Posterior vena cava (tissue), 2 donors: ENCODE measurements at regions of chr19 and their contacts with region 1.

Region 1: DNA sequence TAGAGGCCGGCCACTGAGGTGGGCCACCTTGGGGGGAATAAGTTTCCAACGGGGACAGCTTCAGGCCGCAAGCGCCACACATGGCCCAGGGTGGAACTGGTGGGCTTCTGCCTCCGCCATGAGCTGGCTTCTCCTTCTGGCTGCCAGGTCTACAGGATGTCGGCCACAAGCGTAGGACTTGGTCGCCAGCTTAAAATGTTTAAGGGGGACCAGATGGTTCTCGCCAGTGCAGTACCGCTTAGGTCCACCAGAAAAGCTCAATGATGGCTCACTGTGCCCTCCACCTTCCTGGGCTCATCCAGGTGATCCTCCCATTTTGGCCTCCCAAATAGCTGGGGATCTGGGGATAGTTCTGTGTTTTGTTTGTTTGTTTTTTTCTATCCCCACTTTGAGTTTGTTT is 38.7 kb upstream of the ZNF254 start:
- DNase-seq: no peak

Region 2: DNA sequence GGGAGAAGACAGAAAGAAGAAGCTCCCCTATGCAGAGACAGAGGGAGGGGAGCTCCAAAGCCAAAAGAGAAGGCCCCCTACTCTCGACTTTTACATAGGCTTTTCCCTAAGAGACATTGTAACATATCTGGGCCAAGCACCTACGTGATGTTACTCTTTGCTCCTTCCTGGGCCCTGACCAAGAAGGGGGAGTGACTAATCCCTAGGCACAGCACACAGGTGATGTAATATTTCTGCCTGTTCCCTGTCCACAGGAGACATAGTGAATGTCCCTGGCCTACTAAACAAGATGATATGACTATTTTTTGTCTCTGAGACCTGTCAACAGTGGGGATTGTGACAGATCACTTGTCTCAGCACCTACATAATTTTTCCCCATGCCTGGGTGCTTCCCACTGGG is 22.8 kb after region 1 on chr19:
- intact Hi-C with region 1: loop called in 1 of 2 experiments (anchors 1 kb)
- DNase-seq: no peak